WTC11 (cell line): ENCODE measurements at regions of chr7 and their contacts with region 1.

Region 1: GRCh38 chr7:151008511-151009323 is 15.6 kb downstream of the ATG9B start:
- DNase-seq: peak; percentile 95
- ATAC-seq: peak; percentile 68
- H3K4me3 Mint-ChIP-seq: peak overlapping the region; percentile 40
- H3K27ac Mint-ChIP-seq: no peak overlapping the region; the same call in 1 of the 2 replicates
- H3K4me1 Mint-ChIP-seq: peaks cover 32% of the 10 kb centered on the region
- H3K27me3 Mint-ChIP-seq: peaks cover 13% of the 10 kb centered on the region
- CTCF ChIP-seq: peak; percentile 86

Region 2: DNA sequence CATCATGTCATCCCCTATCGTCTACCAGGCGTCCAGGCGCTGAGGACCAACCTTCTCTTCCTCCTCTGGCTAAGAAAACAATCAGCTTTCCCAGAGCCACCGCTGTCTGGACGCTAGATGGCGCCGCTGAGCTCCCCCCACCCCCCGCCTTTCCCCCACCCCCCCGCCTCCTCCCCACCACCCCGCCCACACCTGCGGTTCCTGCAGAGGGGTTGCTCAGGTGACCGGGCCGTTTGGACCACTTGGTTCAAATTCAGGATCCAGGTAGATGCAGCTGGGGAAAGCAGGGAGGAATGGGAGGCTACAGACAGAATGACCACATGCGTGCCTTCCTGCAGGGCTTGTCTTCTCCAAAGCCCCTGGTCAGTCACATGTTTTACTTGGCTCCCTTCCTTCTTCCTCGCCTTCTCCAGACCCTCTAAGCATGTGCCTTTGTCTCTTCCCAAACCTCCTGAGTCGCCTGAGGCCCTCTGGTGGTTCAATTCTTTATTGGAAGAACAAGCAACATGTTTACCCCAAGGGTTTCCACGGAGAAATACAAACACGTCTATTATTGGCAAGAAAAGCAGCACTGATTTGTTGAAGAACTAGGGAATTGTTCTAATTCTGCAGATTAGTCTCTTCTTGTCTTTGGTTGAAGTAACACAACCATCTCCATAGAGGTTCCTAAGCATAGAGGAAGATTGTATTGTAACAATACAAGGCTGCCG is 131.7 kb before region 1 on chr7:
- CTCF ChIA-PET with region 1: interaction called, 14 read pairs
- POLR2A ChIA-PET with region 1: no interaction called
- DNase-seq: peak; percentile 69
- ATAC-seq: peak; percentile 88
- H3K4me3 Mint-ChIP-seq: peak overlapping the region; percentile 37
- H3K27ac Mint-ChIP-seq: peak overlapping the region; percentile 35; the same call in 1 of the 2 replicates
- H3K4me1 Mint-ChIP-seq: peaks cover 16% of the 10 kb centered on the region
- H3K27me3 Mint-ChIP-seq: peaks cover 8% of the 10 kb centered on the region; the same call in 1 of the 2 replicates
- CTCF ChIP-seq: peak; percentile 52

Region 3: DNA sequence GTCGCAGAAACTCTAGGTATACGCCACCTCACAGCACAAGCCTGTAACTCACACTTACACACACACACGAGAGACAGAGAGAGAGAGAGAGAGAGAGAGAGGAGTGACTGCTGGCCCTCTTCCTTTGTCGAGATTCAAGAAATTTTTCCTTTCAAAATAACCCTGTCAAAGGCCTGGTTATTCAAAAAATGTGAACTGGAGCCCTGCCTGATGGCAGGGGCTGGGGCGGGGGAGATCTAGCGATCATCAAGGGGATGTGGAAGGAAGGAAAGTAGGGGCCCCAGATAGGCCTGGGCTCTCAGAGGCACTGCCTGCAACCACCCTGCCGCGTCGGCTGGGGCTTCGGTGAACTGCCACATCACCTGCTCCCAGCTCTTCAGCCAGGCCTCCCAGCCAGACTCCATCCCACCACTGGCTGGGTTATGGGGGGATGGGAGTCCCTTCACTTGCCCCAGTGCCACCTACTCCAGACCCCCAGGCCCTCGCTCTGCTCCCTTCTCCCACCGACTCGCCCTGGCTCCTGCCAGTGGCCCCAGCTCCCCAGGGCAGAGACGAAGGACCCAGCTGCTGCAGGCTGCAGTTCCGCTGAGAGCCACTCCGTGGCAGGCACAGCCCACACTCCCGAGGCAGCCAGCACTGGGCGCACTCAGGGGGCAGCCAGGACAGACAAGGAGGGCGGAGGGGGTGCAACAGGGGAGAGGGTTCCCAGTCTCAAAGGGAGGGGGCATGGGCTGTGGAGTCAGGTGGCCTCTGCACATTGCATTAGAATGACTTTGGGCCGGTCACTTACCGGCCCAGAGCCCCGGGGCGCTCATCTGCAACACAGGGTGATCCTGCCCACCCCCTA is 45.9 kb before region 1 on chr7:
- CTCF ChIA-PET with region 1: interaction called, 65 read pairs
- POLR2A ChIA-PET with region 1: no interaction called
- DNase-seq: peak; percentile 83
- ATAC-seq: peak; percentile 93
- H3K4me3 Mint-ChIP-seq: no peak overlapping the region
- H3K27ac Mint-ChIP-seq: no peak overlapping the region
- H3K4me1 Mint-ChIP-seq: peaks cover 17% of the 10 kb centered on the region
- H3K27me3 Mint-ChIP-seq: no peaks in the 10 kb centered on the region
- CTCF ChIP-seq: peak; percentile 56

Region 4: DNA sequence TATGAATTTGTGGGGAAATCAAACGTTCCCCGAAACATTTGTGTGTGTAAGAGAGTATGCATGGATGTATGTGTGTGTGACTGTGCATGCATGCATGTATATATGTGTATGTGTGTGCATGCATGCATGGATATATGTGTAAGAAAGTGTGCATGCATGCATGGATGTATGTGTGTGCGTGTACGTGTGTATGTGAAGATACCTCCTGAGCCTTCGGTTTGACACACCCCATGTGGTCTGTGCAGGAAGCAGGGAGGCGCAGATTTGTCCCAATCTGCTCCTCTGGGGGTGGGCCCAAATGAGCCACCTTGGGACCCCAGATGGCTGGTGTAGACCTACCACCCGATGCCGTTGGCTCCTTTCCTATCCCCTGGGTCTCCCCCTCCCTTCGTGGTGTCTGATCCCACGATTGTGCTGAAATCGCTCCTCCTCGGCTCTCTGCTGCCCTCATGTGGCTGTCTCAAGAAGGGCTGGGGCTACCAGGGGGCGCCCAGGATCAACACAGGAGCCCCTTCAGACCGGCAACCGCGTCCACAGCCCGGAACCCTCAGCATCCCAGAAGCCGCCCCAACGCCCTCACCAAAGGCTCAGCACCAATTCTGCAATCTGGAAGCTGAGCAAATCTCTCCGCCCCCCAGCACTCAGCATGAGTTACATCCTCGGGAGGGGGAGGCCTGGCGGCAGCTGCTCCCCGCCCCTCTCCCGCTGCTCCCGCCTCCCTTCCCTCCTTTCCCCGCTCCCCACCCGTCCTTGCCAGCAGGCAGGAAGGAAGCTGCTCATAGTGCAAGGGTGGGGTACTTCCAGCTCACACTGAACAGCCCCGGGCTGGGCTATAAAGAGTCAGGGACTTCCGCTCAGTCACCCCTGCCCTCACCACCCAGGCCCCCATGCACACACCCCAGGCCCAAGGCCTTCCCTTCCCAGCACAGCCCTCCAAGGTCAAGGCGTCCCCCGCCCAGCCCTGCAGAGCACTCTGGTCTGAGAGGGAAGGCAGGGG is 20.2 kb before region 1 on chr7:
- CTCF ChIA-PET with region 1: interaction called, 36 read pairs
- POLR2A ChIA-PET with region 1: no interaction called
- DNase-seq: peak; percentile 93
- ATAC-seq: peak; percentile 68
- H3K4me3 Mint-ChIP-seq: peak overlapping the region; percentile 71
- H3K27ac Mint-ChIP-seq: no peak overlapping the region
- H3K4me1 Mint-ChIP-seq: peaks cover 32% of the 10 kb centered on the region
- H3K27me3 Mint-ChIP-seq: peaks cover 32% of the 10 kb centered on the region
- CTCF ChIP-seq: peak; percentile 92

Region 5: GRCh38 chr7:151028131-151028947 is 19.6 kb after region 1 on chr7 and contains the start of gene ABCB8:
- CTCF ChIA-PET with region 1: interaction called, 49 read pairs
- POLR2A ChIA-PET with region 1: interaction called, 4 read pairs
- DNase-seq: peak; percentile 99
- ATAC-seq: peak; percentile 95
- H3K4me3 Mint-ChIP-seq: peak within 1 kb of the TSS; percentile 92
- H3K27ac Mint-ChIP-seq: peak within 1 kb of the TSS; percentile 99
- H3K4me1 Mint-ChIP-seq: peaks cover 24% of the 10 kb centered on the region
- H3K27me3 Mint-ChIP-seq: peaks cover 8% of the 10 kb centered on the region; the same call in 1 of the 2 replicates
- CTCF ChIP-seq: no peak
- total RNA-seq, gene ABCB8: 27.9 to 35.9 TPM (median 28.4 TPM) in 3 replicates

Region 6: GRCh38 chr7:151057989-151058780 is 49.5 kb after region 1 on chr7:
- CTCF ChIA-PET with region 1: interaction called, 22 read pairs
- POLR2A ChIA-PET with region 1: no interaction called
- DNase-seq: peak; percentile 98
- ATAC-seq: peak; percentile 79
- H3K4me3 Mint-ChIP-seq: peak overlapping the region; percentile 98
- H3K27ac Mint-ChIP-seq: peak overlapping the region; percentile 93
- H3K4me1 Mint-ChIP-seq: peaks cover 38% of the 10 kb centered on the region
- H3K27me3 Mint-ChIP-seq: peaks cover 7% of the 10 kb centered on the region
- CTCF ChIP-seq: no peak